SK-N-SH (cell line): ENCODE measurements at regions of chr7 and their contacts with region 1.

Region 1: DNA sequence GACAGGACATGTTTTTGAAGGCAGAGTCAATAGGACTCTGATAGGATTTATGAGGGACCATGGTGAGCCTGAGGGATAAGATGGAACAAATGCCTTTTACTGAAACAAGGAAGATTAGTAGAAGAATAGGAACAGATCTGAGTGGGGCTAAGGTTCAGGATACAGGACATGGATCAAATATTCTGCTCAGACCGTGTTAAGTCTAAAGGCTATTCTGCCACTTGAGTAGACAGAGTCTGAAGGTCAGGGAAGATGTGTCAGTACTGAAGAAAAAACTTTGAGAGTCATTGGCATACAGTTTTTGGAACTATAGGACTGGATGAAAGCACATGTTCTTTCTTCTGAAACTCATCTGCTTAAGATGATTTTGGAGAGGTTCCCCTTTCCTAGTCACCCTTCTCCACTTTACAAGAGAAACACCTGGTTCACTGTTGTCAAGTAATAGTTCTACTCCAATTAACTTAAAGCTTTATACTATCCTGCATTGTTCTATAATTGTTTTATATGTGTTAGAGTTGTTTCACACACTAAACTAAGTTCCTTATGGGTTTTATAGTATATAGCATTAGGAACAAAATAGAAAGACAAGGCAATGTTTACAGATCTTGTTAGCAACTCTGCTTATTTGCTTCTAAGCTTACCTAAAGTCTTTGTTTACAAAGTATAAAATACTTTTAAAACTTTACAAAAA is 43.4 kb downstream of the WASL start:
- DNase-seq: no peak
- H3K4me3 ChIP-seq: no peak overlapping the region
- H3K27ac ChIP-seq: no peak overlapping the region
- H3K4me1 ChIP-seq: peaks cover under 1 to 10% of the 10 kb centered on the region in 2 experiments; a peak in 2 of 4 replicates
- H3K27me3 ChIP-seq: no peaks in the 10 kb centered on the region
- CTCF ChIP-seq: no peak
- EP300 ChIP-seq: no peak
- RAD21 ChIP-seq: no peak

Region 2: DNA sequence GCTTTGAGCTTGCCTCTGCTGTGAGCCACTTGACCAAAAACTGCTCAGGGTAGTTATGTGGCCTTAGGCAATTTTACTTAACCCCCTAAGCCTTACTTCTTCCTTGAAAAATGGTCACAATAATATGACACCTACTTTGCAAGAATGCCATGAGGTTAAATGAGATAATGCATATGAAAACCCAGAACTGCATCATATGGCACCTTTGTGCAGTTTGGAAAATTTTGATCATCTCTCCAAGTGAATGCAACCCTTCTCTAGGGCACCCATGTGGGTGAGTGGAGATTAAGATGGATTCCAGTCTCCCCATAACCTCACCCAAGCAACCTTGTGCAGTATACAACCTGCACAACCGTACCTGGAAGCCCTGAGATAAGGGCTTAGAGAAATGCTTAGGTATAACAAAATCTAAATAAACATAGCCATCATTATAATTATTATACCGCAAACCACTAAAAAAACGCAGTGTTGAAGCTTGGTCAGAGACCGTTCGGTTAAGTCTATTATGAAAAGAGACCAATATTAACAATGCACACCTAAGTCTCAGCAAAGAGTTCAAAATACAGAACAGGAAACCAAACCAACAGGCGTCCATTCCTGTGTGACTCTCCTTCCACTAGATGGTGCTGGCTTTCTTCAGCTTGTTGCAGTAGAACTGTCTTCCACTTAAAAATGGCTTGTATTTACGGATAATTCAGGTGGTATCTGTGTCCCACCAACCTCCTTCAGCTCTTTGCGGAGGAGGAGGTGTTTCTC is 124.8 kb before region 1 on chr7:
- CTCF ChIA-PET with region 1: interaction called, 12 read pairs
- POLR2A ChIA-PET with region 1: no interaction called
- DNase-seq: peak; percentile 34
- H3K4me3 ChIP-seq: no peak overlapping the region; a peak in 1 of 4 replicates
- H3K27ac ChIP-seq: no peak overlapping the region
- H3K4me1 ChIP-seq: no peaks in the 10 kb centered on the region; a peak in 1 of 4 replicates
- H3K27me3 ChIP-seq: peaks cover 13% of the 10 kb centered on the region; the same call in 1 of the 2 replicates
- CTCF ChIP-seq: peak; percentile 84
- EP300 ChIP-seq: no peak
- RAD21 ChIP-seq: peak; percentile 90

Region 3: DNA sequence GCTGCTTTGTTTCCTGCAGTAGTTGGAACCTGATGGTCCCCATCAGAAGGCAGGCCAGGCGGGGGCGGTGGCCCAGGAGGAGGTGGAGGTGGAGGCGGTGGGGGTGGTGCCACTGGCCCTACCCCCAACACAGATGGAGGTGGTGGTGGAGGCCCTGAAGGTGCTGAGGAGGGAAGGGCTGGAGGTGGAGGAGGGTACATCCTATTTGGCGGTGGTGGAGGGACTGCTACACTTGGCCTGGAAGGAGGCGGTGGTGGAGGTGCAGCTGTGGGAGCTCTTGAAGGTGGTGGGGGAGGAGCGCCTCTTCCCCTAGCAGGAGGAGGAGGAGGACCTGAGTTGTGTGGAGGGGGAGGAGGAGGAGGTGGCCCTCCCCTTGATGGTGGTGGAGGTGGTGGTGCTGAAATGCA is 12.9 kb before region 1 on chr7:
- CTCF ChIA-PET with region 1: interaction called, 39 read pairs
- POLR2A ChIA-PET with region 1: no interaction called
- DNase-seq: no peak
- H3K4me3 ChIP-seq: no peak overlapping the region
- H3K27ac ChIP-seq: no peak overlapping the region
- H3K4me1 ChIP-seq: no peaks in the 10 kb centered on the region; a peak in 1 of 4 replicates
- H3K27me3 ChIP-seq: no peaks in the 10 kb centered on the region
- CTCF ChIP-seq: no peak
- EP300 ChIP-seq: no peak
- RAD21 ChIP-seq: no peak

Region 4: GRCh38 chr7:123719197-123719721 is 13.9 kb after region 1 on chr7:
- CTCF ChIA-PET with region 1: interaction called, 37 read pairs
- POLR2A ChIA-PET with region 1: no interaction called
- DNase-seq: no peak
- H3K4me3 ChIP-seq: no peak overlapping the region
- H3K27ac ChIP-seq: no peak overlapping the region
- H3K4me1 ChIP-seq: peaks cover 0 to 15% of the 10 kb centered on the region in 2 experiments; a peak in 1 of 4 replicates
- H3K27me3 ChIP-seq: no peaks in the 10 kb centered on the region
- CTCF ChIP-seq: no peak
- EP300 ChIP-seq: no peak
- RAD21 ChIP-seq: no peak

Region 5: DNA sequence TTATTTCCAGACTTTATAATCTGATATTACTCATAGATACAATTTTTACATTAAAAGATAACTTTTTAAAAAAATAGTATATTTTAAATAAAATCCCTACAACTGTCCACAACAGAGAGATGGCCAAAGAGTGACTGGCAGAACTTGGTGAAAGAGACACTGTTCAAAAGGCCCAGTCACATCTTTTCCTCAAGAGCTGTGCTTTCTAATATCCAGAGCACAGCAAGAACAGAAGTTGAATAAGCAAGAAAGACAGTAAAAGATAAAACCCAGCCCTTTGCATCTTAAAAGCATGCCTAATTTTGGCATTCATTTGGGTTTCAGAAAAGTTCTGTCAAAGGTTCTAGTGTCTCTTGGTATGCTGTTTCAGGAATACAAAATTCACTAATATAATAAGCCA is 36.6 kb after region 1 on chr7:
- CTCF ChIA-PET with region 1: interaction called, 11 read pairs
- POLR2A ChIA-PET with region 1: no interaction called
- DNase-seq: no peak
- H3K4me3 ChIP-seq: no peak overlapping the region
- H3K27ac ChIP-seq: no peak overlapping the region
- H3K4me1 ChIP-seq: peaks cover 11 to 27% of the 10 kb centered on the region in 2 experiments; a peak in 3 of 4 replicates
- H3K27me3 ChIP-seq: no peaks in the 10 kb centered on the region
- CTCF ChIP-seq: no peak
- EP300 ChIP-seq: no peak
- RAD21 ChIP-seq: no peak

Region 6: GRCh38 chr7:123748734-123749536 is 43.6 kb after region 1 on chr7 and contains the start of gene WASL:
- CTCF ChIA-PET with region 1: interaction called, 10 read pairs
- POLR2A ChIA-PET with region 1: interaction called, 3 read pairs
- DNase-seq: peak; percentile 99
- H3K4me3 ChIP-seq: peak within 1 kb of the TSS; percentile 94 to 100
- H3K27ac ChIP-seq: peak within 1 kb of the TSS; percentile 96 to 100
- H3K4me1 ChIP-seq: peaks cover 27 to 57% of the 10 kb centered on the region in 2 experiments; a peak in 3 of 4 replicates
- H3K27me3 ChIP-seq: no peaks in the 10 kb centered on the region
- CTCF ChIP-seq: no peak
- EP300 ChIP-seq: peak; percentile 26 to 72; a peak in 2 of 4 replicates
- RAD21 ChIP-seq: peak; percentile 19; the same call in 1 of the 2 replicates
- polyA plus RNA-seq, gene WASL: 8.5 and 9.9 TPM in 2 replicates